Naive thymus-derived CD4-positive, alpha-beta T cell (primary cell): ENCODE measurements at regions of chr4 and their contacts with region 1.

Region 1: DNA sequence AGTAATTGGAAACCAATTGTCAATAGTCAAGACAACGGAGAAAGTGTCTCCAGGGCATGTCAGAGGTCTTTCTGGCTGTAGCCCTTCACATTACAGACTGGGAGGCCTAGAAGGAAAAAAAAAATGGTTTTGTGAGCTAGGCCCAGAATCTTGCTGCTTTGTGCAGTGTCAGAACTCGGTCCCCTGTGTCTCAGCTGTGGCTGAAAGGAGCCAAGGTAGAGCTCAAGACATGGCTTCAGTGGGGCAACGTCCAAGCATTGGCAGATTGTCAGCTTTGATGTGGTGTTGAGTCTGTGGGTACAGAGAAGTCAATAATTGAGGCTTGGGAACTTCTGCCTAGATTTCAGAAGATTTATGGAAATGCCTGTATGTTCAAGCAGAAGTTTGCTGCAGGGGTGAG is 103.0 kb downstream of the UGT2B28 start:
- DNase-seq: no peak
- ATAC-seq: no peak
- H3K4me3 ChIP-seq: no peak overlapping the region
- H3K4me3 Mint-ChIP-seq: no peak overlapping the region
- H3K27ac ChIP-seq: no peak overlapping the region
- H3K27ac Mint-ChIP-seq: no peak overlapping the region
- H3K4me1 ChIP-seq: no peaks in the 10 kb centered on the region
- H3K4me1 Mint-ChIP-seq: no peaks in the 10 kb centered on the region
- H3K27me3 ChIP-seq: no peaks in the 10 kb centered on the region
- H3K27me3 Mint-ChIP-seq: no peaks in the 10 kb centered on the region

Region 2: GRCh38 chr4:69224891-69225290 is 158.4 kb before region 1 on chr4:
- CTCF ChIA-PET with region 1: no interaction called
- POLR2A ChIA-PET with region 1: no interaction called
- intact Hi-C with region 1: loop called (anchors 2 kb)
- DNase-seq: no peak
- ATAC-seq: no peak
- H3K4me3 ChIP-seq: no peak overlapping the region
- H3K4me3 Mint-ChIP-seq: no peak overlapping the region
- H3K27ac ChIP-seq: no peak overlapping the region
- H3K27ac Mint-ChIP-seq: no peak overlapping the region
- H3K4me1 ChIP-seq: no peaks in the 10 kb centered on the region
- H3K4me1 Mint-ChIP-seq: no peaks in the 10 kb centered on the region
- H3K27me3 ChIP-seq: no peaks in the 10 kb centered on the region
- H3K27me3 Mint-ChIP-seq: no peaks in the 10 kb centered on the region

Region 3: GRCh38 chr4:69408451-69408850 is 25.2 kb after region 1 on chr4:
- CTCF ChIA-PET with region 1: no interaction called
- POLR2A ChIA-PET with region 1: no interaction called
- intact Hi-C with region 1: no loop called
- DNase-seq: no peak
- ATAC-seq: no peak
- H3K4me3 ChIP-seq: no peak overlapping the region
- H3K4me3 Mint-ChIP-seq: no peak overlapping the region
- H3K27ac ChIP-seq: no peak overlapping the region
- H3K27ac Mint-ChIP-seq: no peak overlapping the region
- H3K4me1 ChIP-seq: no peaks in the 10 kb centered on the region
- H3K4me1 Mint-ChIP-seq: no peaks in the 10 kb centered on the region
- H3K27me3 ChIP-seq: no peaks in the 10 kb centered on the region
- H3K27me3 Mint-ChIP-seq: no peaks in the 10 kb centered on the region

Region 4: DNA sequence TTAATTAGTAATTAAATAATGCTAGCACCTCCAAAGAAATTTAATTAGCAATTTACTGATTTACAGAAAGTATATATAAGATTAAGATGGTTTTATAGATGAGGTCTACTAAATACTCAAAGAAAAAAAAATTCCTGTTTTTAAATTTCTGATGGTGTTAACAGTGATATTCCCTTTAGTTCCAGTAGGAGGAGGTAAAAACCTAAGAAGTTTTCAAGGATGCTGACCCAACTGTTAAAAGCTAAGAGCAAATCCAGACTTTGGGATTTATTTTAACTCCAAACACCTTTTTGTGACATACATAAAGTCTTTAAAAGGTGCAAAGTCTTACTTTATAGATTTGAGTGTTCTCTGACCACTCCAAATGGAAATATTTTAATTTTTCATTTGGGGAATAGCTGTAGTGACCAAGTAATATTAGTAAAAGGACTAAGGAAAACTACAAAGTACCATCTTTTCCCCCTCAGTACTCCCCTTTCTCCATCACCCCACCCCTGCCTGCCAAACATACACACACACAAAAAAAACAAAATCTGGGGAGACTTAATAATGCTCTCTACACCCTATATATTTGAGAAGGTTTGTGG is 513.3 kb after region 1 on chr4:
- CTCF ChIA-PET with region 1: no interaction called
- POLR2A ChIA-PET with region 1: no interaction called
- intact Hi-C with region 1: no loop called
- DNase-seq: no peak
- ATAC-seq: no peak
- H3K4me3 ChIP-seq: no peak overlapping the region
- H3K4me3 Mint-ChIP-seq: no peak overlapping the region
- H3K27ac ChIP-seq: no peak overlapping the region
- H3K27ac Mint-ChIP-seq: no peak overlapping the region
- H3K4me1 ChIP-seq: no peaks in the 10 kb centered on the region
- H3K4me1 Mint-ChIP-seq: no peaks in the 10 kb centered on the region
- H3K27me3 ChIP-seq: no peaks in the 10 kb centered on the region
- H3K27me3 Mint-ChIP-seq: peaks cover 0 to 40% (median 22%) of the 10 kb centered on the region in 5 donors